ENCODE measurements at regions of chr2 and their contacts with region 1.

Region 1: GRCh38 chr2:222903234-222904220 is 42.7 kb downstream of the ACSL3 start:
- DNase-seq: peak; percentile 40
- ATAC-seq: peak; percentile 66
- H3K4me3 Mint-ChIP-seq: no peak overlapping the region
- H3K27ac Mint-ChIP-seq: no peak overlapping the region
- H3K4me1 Mint-ChIP-seq: peaks cover 22% of the 10 kb centered on the region
- H3K27me3 Mint-ChIP-seq: no peaks in the 10 kb centered on the region

Region 2: DNA sequence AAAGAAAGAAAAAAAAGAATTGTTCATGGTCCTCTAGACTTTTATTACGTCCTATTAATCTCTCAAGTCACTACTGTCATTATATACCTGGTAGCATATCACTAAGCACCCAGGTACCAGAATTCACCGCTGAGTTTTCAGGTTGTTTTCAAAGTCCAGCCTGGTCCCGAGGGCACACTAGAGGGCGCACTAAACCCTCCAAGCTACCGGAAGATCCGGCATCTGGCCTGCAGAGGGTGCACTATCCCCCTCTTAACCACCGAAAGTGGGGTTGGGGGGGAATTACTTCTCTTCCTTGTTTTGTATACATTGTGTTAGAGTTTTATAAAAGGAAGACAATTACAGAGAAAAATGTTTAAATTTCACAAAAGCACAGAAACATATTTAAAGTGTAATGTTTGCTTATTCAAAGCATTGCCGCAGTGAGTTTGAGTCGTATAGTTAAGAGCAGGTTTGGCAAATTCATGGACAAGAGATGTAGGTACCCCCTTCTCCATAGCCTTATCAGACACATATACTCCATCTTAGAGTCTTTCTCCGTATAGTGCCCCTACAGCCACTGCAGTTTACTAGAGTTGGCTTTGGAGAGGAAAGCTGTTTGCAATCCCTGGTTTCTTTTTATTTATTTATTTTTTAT is 212.8 kb before region 1 on chr2:
- CTCF ChIA-PET with region 1: interaction called, 11 read pairs
- POLR2A ChIA-PET with region 1: no interaction called
- intact Hi-C with region 1: loop called in 1 of 2 experiments (anchors 1 kb)
- DNase-seq: peak; percentile 88
- ATAC-seq: peak; percentile 96
- H3K4me3 Mint-ChIP-seq: no peak overlapping the region
- H3K27ac Mint-ChIP-seq: no peak overlapping the region
- H3K4me1 Mint-ChIP-seq: peaks cover 8% of the 10 kb centered on the region
- H3K27me3 Mint-ChIP-seq: no peaks in the 10 kb centered on the region

Region 3: DNA sequence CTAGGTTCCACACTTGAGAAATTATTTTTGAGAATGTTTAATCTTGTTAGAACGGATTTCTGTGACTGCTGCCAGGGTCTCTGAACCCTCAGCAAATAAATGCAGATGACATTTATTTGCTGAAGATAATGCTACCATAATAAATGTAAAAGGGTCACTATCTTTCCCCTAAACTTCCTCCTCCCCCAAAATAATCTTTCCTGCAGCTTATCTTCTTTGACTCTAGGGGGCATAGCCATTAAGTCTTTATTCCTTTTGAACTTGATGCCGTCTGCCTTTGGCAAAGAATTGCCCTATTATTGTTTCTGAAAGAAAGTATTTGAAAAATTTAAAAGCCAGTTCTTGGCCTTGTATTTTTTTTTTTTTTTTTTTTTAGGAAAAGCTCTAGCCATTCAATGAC is 106.3 kb before region 1 on chr2:
- CTCF ChIA-PET with region 1: interaction called, 3 read pairs
- POLR2A ChIA-PET with region 1: no interaction called
- intact Hi-C with region 1: loop called (anchors 1 to 2 kb)
- DNase-seq: no peak
- ATAC-seq: peak; percentile 37
- H3K4me3 Mint-ChIP-seq: no peak overlapping the region
- H3K27ac Mint-ChIP-seq: no peak overlapping the region
- H3K4me1 Mint-ChIP-seq: no peaks in the 10 kb centered on the region
- H3K27me3 Mint-ChIP-seq: no peaks in the 10 kb centered on the region

Region 4: DNA sequence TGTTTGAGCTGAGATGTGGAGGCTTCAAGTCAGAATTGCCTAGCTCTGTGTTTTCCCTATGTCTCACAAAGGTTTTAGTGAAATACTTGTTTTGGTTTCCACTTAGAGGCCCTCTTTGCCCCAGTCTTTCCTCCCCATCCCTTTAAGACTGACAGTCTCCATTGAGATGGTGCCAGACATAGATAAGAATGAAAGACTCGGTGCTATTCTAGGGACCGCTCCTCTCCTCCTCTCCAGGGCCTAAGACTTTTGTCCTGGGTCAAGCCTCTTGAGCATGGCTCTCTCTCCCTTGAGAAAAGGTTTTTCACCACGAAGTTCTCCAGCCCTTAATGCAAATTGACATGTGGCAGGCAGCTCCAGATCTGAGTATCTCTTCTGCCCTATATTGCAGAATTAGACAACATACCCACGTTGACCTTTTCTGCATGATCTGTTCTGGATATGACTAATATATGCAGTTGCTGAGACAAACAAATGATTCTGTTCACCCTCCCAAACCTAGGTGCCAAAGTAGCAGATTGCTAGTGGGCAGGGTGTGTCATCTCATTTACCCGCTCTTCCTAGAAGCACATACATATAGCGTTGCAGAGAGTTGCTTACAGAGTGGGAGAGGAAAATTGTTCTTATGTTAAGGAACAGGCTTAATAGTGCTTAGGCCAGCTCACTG is 90.2 kb before region 1 on chr2:
- CTCF ChIA-PET with region 1: no interaction called
- POLR2A ChIA-PET with region 1: no interaction called
- intact Hi-C with region 1: loop called in 1 of 2 experiments (anchors 5 kb)
- DNase-seq: peak; percentile 63
- ATAC-seq: peak; percentile 91
- H3K4me3 Mint-ChIP-seq: no peak overlapping the region
- H3K27ac Mint-ChIP-seq: peak overlapping the region; percentile 90
- H3K4me1 Mint-ChIP-seq: peaks cover 27% of the 10 kb centered on the region
- H3K27me3 Mint-ChIP-seq: no peaks in the 10 kb centered on the region

Region 5: GRCh38 chr2:222860740-222861410 is 42.7 kb before region 1 on chr2 and contains the start of gene ACSL3:
- CTCF ChIA-PET with region 1: interaction called, 7 read pairs
- POLR2A ChIA-PET with region 1: no interaction called
- intact Hi-C with region 1: loop called (anchors 2 kb)
- DNase-seq: peak; percentile 97
- ATAC-seq: peak; percentile 100
- H3K4me3 Mint-ChIP-seq: peak within 1 kb of the TSS; percentile 67
- H3K27ac Mint-ChIP-seq: peak within 1 kb of the TSS; percentile 91
- H3K4me1 Mint-ChIP-seq: peaks cover 9% of the 10 kb centered on the region
- H3K27me3 Mint-ChIP-seq: peaks cover 4% of the 10 kb centered on the region
- total RNA-seq, gene ACSL3: 46.2 to 48.8 TPM

Region 6: DNA sequence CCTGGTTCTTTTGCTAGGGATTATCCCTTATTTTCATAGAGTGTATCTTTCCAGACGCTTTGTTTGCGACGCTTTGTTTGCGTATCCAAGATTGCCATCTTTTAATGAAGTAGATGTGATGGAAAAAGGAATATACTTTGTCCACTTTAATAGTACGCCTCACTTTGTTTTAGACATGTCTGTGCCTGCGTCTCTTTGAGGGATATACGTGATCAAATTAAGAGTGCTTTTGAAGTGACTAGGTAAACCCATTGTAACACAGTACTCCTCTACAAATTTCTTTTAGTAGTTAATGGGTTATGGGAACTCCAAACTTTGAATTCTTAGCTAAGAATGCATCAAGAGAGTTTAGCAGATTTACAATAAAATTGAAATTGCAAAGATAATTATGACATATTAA is 14.8 kb before region 1 on chr2:
- CTCF ChIA-PET with region 1: interaction called, 15 read pairs
- POLR2A ChIA-PET with region 1: no interaction called
- intact Hi-C with region 1: no loop called
- DNase-seq: no peak
- ATAC-seq: no peak
- H3K4me3 Mint-ChIP-seq: no peak overlapping the region
- H3K27ac Mint-ChIP-seq: no peak overlapping the region
- H3K4me1 Mint-ChIP-seq: peaks cover 29% of the 10 kb centered on the region
- H3K27me3 Mint-ChIP-seq: no peaks in the 10 kb centered on the region